Caco-2 (cell line): ENCODE measurements at regions of chr20 and their contacts with region 1.

Region 1: GRCh38 chr20:35277531-35278395 is at the start of gene MMP24OS:
- DNase-seq: peak; percentile 91
- H3K4me3 ChIP-seq: peak within 1 kb of the TSS; percentile 58
- H3K4me3 Mint-ChIP-seq: peak within 1 kb of the TSS; percentile 72
- H3K27ac Mint-ChIP-seq: peak within 1 kb of the TSS; percentile 74
- H3K4me1 ChIP-seq: peaks cover 4% of the 10 kb centered on the region; the same call in 1 of the 2 replicates
- H3K4me1 Mint-ChIP-seq: no peaks in the 10 kb centered on the region
- H3K27me3 ChIP-seq: no peaks in the 10 kb centered on the region
- H3K27me3 Mint-ChIP-seq: no peaks in the 10 kb centered on the region
- CTCF ChIP-seq: peak; percentile 11 to 48
- total RNA-seq, gene MMP24OS: 38.8 and 42.3 TPM in 2 replicates

Region 2: GRCh38 chr20:35085477-35086225 is 192.1 kb before region 1 on chr20:
- CTCF ChIA-PET with region 1: no interaction called
- POLR2A ChIA-PET with region 1: no interaction called
- intact Hi-C with region 1: no loop called
- DNase-seq: no peak
- H3K4me3 ChIP-seq: no peak overlapping the region
- H3K4me3 Mint-ChIP-seq: no peak overlapping the region
- H3K27ac Mint-ChIP-seq: no peak overlapping the region
- H3K4me1 ChIP-seq: no peaks in the 10 kb centered on the region
- H3K4me1 Mint-ChIP-seq: peaks cover 6% of the 10 kb centered on the region
- H3K27me3 ChIP-seq: no peaks in the 10 kb centered on the region
- H3K27me3 Mint-ChIP-seq: no peaks in the 10 kb centered on the region
- CTCF ChIP-seq: no peak

Region 3: GRCh38 chr20:35292376-35293285 is 14.9 kb after region 1 on chr20 and contains the start of gene FAM83C:
- CTCF ChIA-PET with region 1: no interaction called
- POLR2A ChIA-PET with region 1: no interaction called
- intact Hi-C with region 1: no loop called
- DNase-seq: no peak
- H3K4me3 ChIP-seq: no peak within 1 kb of the TSS
- H3K4me3 Mint-ChIP-seq: no peak within 1 kb of the TSS
- H3K27ac Mint-ChIP-seq: no peak within 1 kb of the TSS
- H3K4me1 ChIP-seq: peaks cover 12% of the 10 kb centered on the region
- H3K4me1 Mint-ChIP-seq: peaks cover 17% of the 10 kb centered on the region
- H3K27me3 ChIP-seq: no peaks in the 10 kb centered on the region
- H3K27me3 Mint-ChIP-seq: no peaks in the 10 kb centered on the region
- CTCF ChIP-seq: no peak
- total RNA-seq, gene FAM83C: 0.09 TPM in 1 of 2 replicates, not detected in the other

Region 4: GRCh38 chr20:35421322-35421721 is 143.6 kb after region 1 on chr20:
- CTCF ChIA-PET with region 1: no interaction called
- POLR2A ChIA-PET with region 1: interaction called, 11 read pairs
- intact Hi-C with region 1: no loop called
- DNase-seq: no peak
- H3K4me3 ChIP-seq: no peak overlapping the region
- H3K4me3 Mint-ChIP-seq: no peak overlapping the region
- H3K27ac Mint-ChIP-seq: no peak overlapping the region
- H3K4me1 ChIP-seq: no peaks in the 10 kb centered on the region
- H3K4me1 Mint-ChIP-seq: no peaks in the 10 kb centered on the region
- H3K27me3 ChIP-seq: no peaks in the 10 kb centered on the region
- H3K27me3 Mint-ChIP-seq: peaks cover 14% of the 10 kb centered on the region
- CTCF ChIP-seq: no peak

Region 5: DNA sequence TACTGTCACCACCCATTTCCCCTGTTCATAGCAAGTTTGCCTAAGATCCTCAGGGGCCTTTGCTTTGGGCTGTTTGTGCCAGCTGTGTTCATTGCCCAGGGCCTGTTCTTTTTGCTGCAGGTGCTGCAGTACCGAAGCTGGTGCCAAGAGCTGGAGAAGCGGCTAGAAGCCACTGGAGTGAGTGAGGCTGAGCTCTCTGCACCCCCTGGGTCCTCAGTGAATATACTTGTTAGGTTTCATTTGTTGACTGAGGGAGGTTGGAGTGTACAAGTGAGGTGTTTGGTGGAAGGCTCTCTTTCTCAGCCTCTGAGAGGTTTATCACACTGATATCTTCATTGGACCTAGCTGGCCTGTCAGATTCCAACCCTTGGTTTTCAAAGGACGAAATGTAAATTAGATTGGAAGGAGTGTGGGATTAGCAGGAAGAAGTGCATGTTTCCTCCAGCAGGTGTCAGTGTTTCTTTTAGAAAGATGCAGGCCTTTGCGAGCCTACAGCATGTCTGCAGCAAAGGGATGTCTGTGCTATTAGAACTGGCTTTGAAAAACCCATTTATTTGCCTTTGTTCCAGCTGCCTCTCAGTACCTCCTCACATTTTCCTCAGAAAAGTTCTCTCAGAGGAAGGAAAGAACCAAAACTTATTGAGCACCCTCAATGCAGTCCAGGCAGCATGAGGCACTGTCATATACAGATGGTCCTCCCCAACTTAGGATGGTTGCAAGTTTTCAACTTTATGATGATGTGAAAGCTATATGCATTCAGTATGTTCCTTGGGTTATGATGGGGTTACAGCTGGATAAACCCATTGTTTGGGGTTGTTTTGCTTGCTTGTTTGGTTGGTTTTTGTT is 185.9 kb after region 1 on chr20:
- CTCF ChIA-PET with region 1: no interaction called
- POLR2A ChIA-PET with region 1: no interaction called
- intact Hi-C with region 1: no loop called
- DNase-seq: peak; percentile 83 to 88
- H3K4me3 ChIP-seq: no peak overlapping the region
- H3K4me3 Mint-ChIP-seq: no peak overlapping the region
- H3K27ac Mint-ChIP-seq: no peak overlapping the region
- H3K4me1 ChIP-seq: peaks cover 13% of the 10 kb centered on the region
- H3K4me1 Mint-ChIP-seq: peaks cover 18% of the 10 kb centered on the region
- H3K27me3 ChIP-seq: no peaks in the 10 kb centered on the region
- H3K27me3 Mint-ChIP-seq: no peaks in the 10 kb centered on the region
- CTCF ChIP-seq: peak; percentile 96 to 97